Activated T-helper 1 cell treated with anti-CD3 and anti-CD28 coated beads, Interleukin-12 subunit alpha, Interleukin-12 subunit beta, Interleukin-2, Interleukin-4 antibody, amounts not matched to agents 30 ng/mL and 10 ng/mL and 1 ng/mL, durations not matched to agents 14 hours and 24 hours and 36 hours (primary cell): ENCODE measurements at regions of chr9 and their contacts with region 1.

Region 1: GRCh38 chr9:93453047-93453914 is at the start of gene FAM120AOS:
- DNase-seq: peak; percentile 81
- H3K4me3 Mint-ChIP-seq: peak within 1 kb of the TSS; percentile 98
- H3K27ac Mint-ChIP-seq: peak within 1 kb of the TSS; percentile 95
- H3K4me1 Mint-ChIP-seq: peaks cover 51% of the 10 kb centered on the region
- H3K27me3 Mint-ChIP-seq: no peaks in the 10 kb centered on the region
- total RNA-seq, gene FAM120AOS: 31.2 and 38.8 TPM in 2 replicates

Region 2: GRCh38 chr9:92115071-92115858 is 1338.0 kb before region 1 on chr9 and contains the start of gene SPTLC1:
- intact Hi-C with region 1: loop called (anchors 2 kb)
- DNase-seq: peak; percentile 93
- H3K4me3 Mint-ChIP-seq: peak within 1 kb of the TSS; percentile 97
- H3K27ac Mint-ChIP-seq: peak within 1 kb of the TSS; percentile 95
- H3K4me1 Mint-ChIP-seq: peaks cover 47% of the 10 kb centered on the region
- H3K27me3 Mint-ChIP-seq: no peaks in the 10 kb centered on the region
- total RNA-seq, gene SPTLC1: 60.2 and 62.3 TPM in 2 replicates

Region 3: GRCh38 chr9:92837191-92837590 is 616.1 kb before region 1 on chr9:
- intact Hi-C with region 1: no loop called
- DNase-seq: no peak
- H3K4me3 Mint-ChIP-seq: no peak overlapping the region
- H3K27ac Mint-ChIP-seq: no peak overlapping the region
- H3K4me1 Mint-ChIP-seq: no peaks in the 10 kb centered on the region
- H3K27me3 Mint-ChIP-seq: no peaks in the 10 kb centered on the region

Region 4: GRCh38 chr9:92877531-92878430 is 575.5 kb before region 1 on chr9 and contains the start of gene ZNF484:
- intact Hi-C with region 1: loop called (anchors 5 kb)
- DNase-seq: peak; percentile 92
- H3K4me3 Mint-ChIP-seq: peak within 1 kb of the TSS; percentile 92
- H3K27ac Mint-ChIP-seq: peak within 1 kb of the TSS; percentile 97
- H3K4me1 Mint-ChIP-seq: peaks cover 46% of the 10 kb centered on the region
- H3K27me3 Mint-ChIP-seq: peaks cover 4% of the 10 kb centered on the region
- total RNA-seq, gene ZNF484: 7.2 and 8.1 TPM in 2 replicates

Region 5: DNA sequence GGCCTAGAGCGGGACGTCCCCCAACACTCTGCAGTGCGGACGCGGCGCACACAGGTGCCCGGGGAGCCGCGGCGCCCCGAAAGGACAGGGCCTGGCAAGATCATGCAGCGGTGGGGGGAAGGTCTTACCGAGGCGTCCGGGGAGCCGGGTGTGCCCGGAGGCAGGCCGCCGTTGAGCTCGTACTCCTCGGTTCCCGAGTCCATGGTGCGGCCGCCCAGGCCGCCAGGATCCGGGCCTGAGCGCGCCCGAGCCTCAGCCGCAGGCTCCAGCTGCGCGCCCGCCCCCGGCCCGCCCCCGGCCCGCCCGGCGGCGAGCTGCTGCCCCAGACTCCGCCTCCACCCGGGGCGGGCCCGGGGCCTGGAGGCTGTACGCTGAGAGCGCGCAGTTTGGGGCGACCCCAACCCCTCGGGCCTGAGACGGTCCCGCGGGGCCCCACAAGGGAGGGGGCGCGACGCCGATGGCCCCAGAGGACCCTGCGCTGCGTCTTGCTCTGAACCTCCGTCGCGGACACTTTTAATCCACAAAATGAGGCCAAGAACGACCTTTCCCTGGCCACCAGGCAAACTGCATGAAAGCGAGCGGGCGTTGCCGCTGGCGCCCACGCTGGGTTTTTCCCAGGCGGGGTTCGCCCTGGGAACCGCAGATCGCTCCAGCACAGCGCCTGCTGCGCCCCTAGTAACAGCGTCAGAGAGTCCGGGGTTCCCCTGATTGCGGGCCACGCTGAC is 319.1 kb before region 1 on chr9 and contains the start of gene NINJ1:
- intact Hi-C with region 1: loop called (anchors 1 kb)
- DNase-seq: peak; percentile 89
- H3K4me3 Mint-ChIP-seq: peak within 1 kb of the TSS; percentile 94
- H3K27ac Mint-ChIP-seq: peak within 1 kb of the TSS; percentile 96
- H3K4me1 Mint-ChIP-seq: peaks cover 57% of the 10 kb centered on the region
- H3K27me3 Mint-ChIP-seq: peaks cover 2% of the 10 kb centered on the region
- total RNA-seq, gene NINJ1: 94.2 and 95.3 TPM in 2 replicates

Region 6: GRCh38 chr9:93463638-93464248 is 10.5 kb after region 1 on chr9:
- intact Hi-C with region 1: loop called (anchors 1 kb)
- DNase-seq: no peak
- H3K4me3 Mint-ChIP-seq: peak overlapping the region; percentile 77
- H3K27ac Mint-ChIP-seq: peak overlapping the region; percentile 93
- H3K4me1 Mint-ChIP-seq: peaks cover 88% of the 10 kb centered on the region
- H3K27me3 Mint-ChIP-seq: no peaks in the 10 kb centered on the region

Region 7: GRCh38 chr9:93566408-93567270 is 113.4 kb after region 1 on chr9:
- intact Hi-C with region 1: loop called (anchors 1 kb)
- DNase-seq: peak; percentile 99
- H3K4me3 Mint-ChIP-seq: peak overlapping the region; percentile 85
- H3K27ac Mint-ChIP-seq: peak overlapping the region; percentile 87
- H3K4me1 Mint-ChIP-seq: peaks cover 22% of the 10 kb centered on the region
- H3K27me3 Mint-ChIP-seq: no peaks in the 10 kb centered on the region